CD8-positive, alpha-beta memory T cell (primary cell): ENCODE measurements at regions of chr4 and their contacts with region 1.

Region 1: GRCh38 chr4:51842554-51843308 is at the start of gene DCUN1D4:
- DNase-seq: peak; percentile 96 to 98 (median 98)
- H3K4me3 ChIP-seq: peak within 1 kb of the TSS; percentile 93
- H3K4me3 Mint-ChIP-seq: peak within 1 kb of the TSS; percentile 87 to 99 (median 97)
- H3K27ac ChIP-seq: peak within 1 kb of the TSS; percentile 66
- H3K27ac Mint-ChIP-seq: peak within 1 kb of the TSS; percentile 70 to 99 (median 92)
- H3K4me1 ChIP-seq: peaks cover 6% of the 10 kb centered on the region
- H3K4me1 Mint-ChIP-seq: peaks cover 24 to 33% (median 30%) of the 10 kb centered on the region in 3 donors
- H3K27me3 ChIP-seq: no peaks in the 10 kb centered on the region
- H3K27me3 Mint-ChIP-seq: peaks cover 0 to 2% of the 10 kb centered on the region in 2 donors
- total RNA-seq, gene DCUN1D4: 24.6 to 27.0 TPM

Region 2: GRCh38 chr4:51820443-51821234 is 22.1 kb before region 1 on chr4:
- CTCF ChIA-PET with region 1: no interaction called
- POLR2A ChIA-PET with region 1: no interaction called
- DNase-seq: no peak
- H3K4me3 ChIP-seq: no peak overlapping the region
- H3K4me3 Mint-ChIP-seq: no peak overlapping the region
- H3K27ac ChIP-seq: no peak overlapping the region
- H3K27ac Mint-ChIP-seq: no peak overlapping the region
- H3K4me1 ChIP-seq: no peaks in the 10 kb centered on the region
- H3K4me1 Mint-ChIP-seq: no peaks in the 10 kb centered on the region
- H3K27me3 ChIP-seq: no peaks in the 10 kb centered on the region
- H3K27me3 Mint-ChIP-seq: peaks cover 3 to 7% of the 10 kb centered on the region in 2 donors

Region 3: GRCh38 chr4:51831133-51831532 is 11.6 kb before region 1 on chr4:
- CTCF ChIA-PET with region 1: interaction called, 10 read pairs
- POLR2A ChIA-PET with region 1: interaction called, 4 read pairs
- DNase-seq: peak; percentile 37 to 77 (median 48)
- H3K4me3 ChIP-seq: no peak overlapping the region
- H3K4me3 Mint-ChIP-seq: no peak overlapping the region
- H3K27ac ChIP-seq: no peak overlapping the region
- H3K27ac Mint-ChIP-seq: no peak overlapping the region
- H3K4me1 ChIP-seq: no peaks in the 10 kb centered on the region
- H3K4me1 Mint-ChIP-seq: no peaks in the 10 kb centered on the region
- H3K27me3 ChIP-seq: no peaks in the 10 kb centered on the region
- H3K27me3 Mint-ChIP-seq: peaks cover 15 to 42% of the 10 kb centered on the region in 2 donors

Region 4: GRCh38 chr4:52712172-52712990 is 869.6 kb after region 1 on chr4:
- CTCF ChIA-PET with region 1: no interaction called
- POLR2A ChIA-PET with region 1: interaction called, 11 read pairs
- DNase-seq: peak; percentile 95 to 97 (median 97)
- H3K4me3 ChIP-seq: peak overlapping the region; percentile 79
- H3K4me3 Mint-ChIP-seq: peak overlapping the region; percentile 93 to 96 (median 94)
- H3K27ac ChIP-seq: peak overlapping the region; percentile 94
- H3K27ac Mint-ChIP-seq: peak overlapping the region; percentile 92 to 97 (median 96)
- H3K4me1 ChIP-seq: peaks cover 38% of the 10 kb centered on the region
- H3K4me1 Mint-ChIP-seq: peaks cover 43 to 58% (median 47%) of the 10 kb centered on the region in 3 donors
- H3K27me3 ChIP-seq: no peaks in the 10 kb centered on the region
- H3K27me3 Mint-ChIP-seq: no peaks in the 10 kb centered on the region